Caco-2 (cell line): ENCODE measurements at regions of chr2 and their contacts with region 1.

Region 1: GRCh38 chr2:109545828-109546713 is 67.7 kb downstream of the SEPTIN10 start:
- DNase-seq: peak; percentile 60 to 81
- H3K4me3 ChIP-seq: no peak overlapping the region
- H3K4me3 Mint-ChIP-seq: no peak overlapping the region
- H3K27ac Mint-ChIP-seq: no peak overlapping the region
- H3K4me1 ChIP-seq: peaks cover 8% of the 10 kb centered on the region; the same call in 1 of the 2 replicates
- H3K4me1 Mint-ChIP-seq: peaks cover 4% of the 10 kb centered on the region
- H3K27me3 ChIP-seq: no peaks in the 10 kb centered on the region
- H3K27me3 Mint-ChIP-seq: no peaks in the 10 kb centered on the region
- CTCF ChIP-seq: peak; percentile 94 to 97

Region 2: GRCh38 chr2:109275120-109276012 is 270.7 kb before region 1 on chr2:
- CTCF ChIA-PET with region 1: no interaction called
- POLR2A ChIA-PET with region 1: no interaction called
- intact Hi-C with region 1: no loop called
- DNase-seq: no peak
- H3K4me3 ChIP-seq: no peak overlapping the region
- H3K4me3 Mint-ChIP-seq: no peak overlapping the region
- H3K27ac Mint-ChIP-seq: no peak overlapping the region
- H3K4me1 ChIP-seq: peaks cover 4% of the 10 kb centered on the region; the same call in 1 of the 2 replicates
- H3K4me1 Mint-ChIP-seq: no peaks in the 10 kb centered on the region
- H3K27me3 ChIP-seq: peaks cover 3% of the 10 kb centered on the region
- H3K27me3 Mint-ChIP-seq: no peaks in the 10 kb centered on the region
- CTCF ChIP-seq: no peak

Region 3: GRCh38 chr2:109516445-109517117 is 29.5 kb before region 1 on chr2:
- CTCF ChIA-PET with region 1: interaction called, 4 read pairs
- POLR2A ChIA-PET with region 1: no interaction called
- intact Hi-C with region 1: loop called (anchors 1 kb)
- DNase-seq: peak; percentile 75 to 82
- H3K4me3 ChIP-seq: no peak overlapping the region
- H3K4me3 Mint-ChIP-seq: no peak overlapping the region
- H3K27ac Mint-ChIP-seq: no peak overlapping the region
- H3K4me1 ChIP-seq: peaks cover 3% of the 10 kb centered on the region; the same call in 1 of the 2 replicates
- H3K4me1 Mint-ChIP-seq: no peaks in the 10 kb centered on the region
- H3K27me3 ChIP-seq: no peaks in the 10 kb centered on the region
- H3K27me3 Mint-ChIP-seq: no peaks in the 10 kb centered on the region
- CTCF ChIP-seq: peak; percentile 75 to 94

Region 4: GRCh38 chr2:109613922-109614714 is 68.0 kb after region 1 on chr2 and contains the starts of genes SEPTIN10 and SOWAHC:
- CTCF ChIA-PET with region 1: interaction called, 10 read pairs
- POLR2A ChIA-PET with region 1: interaction called, 4 read pairs
- intact Hi-C with region 1: loop called (anchors 1 kb)
- DNase-seq: peak; percentile 99 to 100
- H3K4me3 ChIP-seq: peak within 1 kb of the TSS; percentile 73
- H3K4me3 Mint-ChIP-seq: peak within 1 kb of the TSS; percentile 95
- H3K27ac Mint-ChIP-seq: peak within 1 kb of the TSS; percentile 95
- H3K4me1 ChIP-seq: peaks cover 32% of the 10 kb centered on the region
- H3K4me1 Mint-ChIP-seq: peaks cover 24% of the 10 kb centered on the region
- H3K27me3 ChIP-seq: no peaks in the 10 kb centered on the region
- H3K27me3 Mint-ChIP-seq: no peaks in the 10 kb centered on the region
- CTCF ChIP-seq: no peak
- total RNA-seq, gene SEPTIN10: 77.3 and 83.7 TPM in 2 replicates
- total RNA-seq, gene SOWAHC: 20.3 and 21.4 TPM in 2 replicates

Region 5: DNA sequence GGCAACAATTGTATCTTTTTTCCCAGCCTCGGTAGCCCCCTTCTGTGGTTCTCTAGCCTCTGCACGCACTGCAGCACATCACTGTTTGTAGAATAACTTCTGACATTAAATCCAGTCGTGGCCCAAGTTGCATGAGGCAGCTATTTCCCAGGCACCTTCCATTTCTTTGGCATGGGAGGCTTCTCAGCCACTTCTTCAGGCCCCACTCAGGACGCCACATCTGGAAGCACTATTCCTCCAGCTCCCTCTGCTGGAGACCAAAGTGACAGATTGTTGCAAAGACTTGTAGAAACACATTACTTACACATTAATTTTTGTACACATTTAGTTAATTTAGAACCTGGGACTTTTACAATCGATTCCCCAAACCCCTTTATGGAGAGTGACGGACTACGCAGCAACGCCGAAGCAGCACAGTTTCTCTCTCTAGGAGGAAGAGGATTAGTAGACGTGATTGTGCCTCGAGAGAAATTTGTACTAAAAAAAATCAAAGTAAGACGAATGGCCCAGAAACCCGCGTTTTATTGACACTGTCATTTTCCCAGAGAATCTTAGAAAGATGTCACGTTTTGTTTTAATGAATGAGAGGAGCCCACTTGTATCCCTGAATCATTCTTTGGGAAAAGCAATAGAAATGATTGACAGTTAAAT is 190.2 kb after region 1 on chr2:
- CTCF ChIA-PET with region 1: interaction called, 18 read pairs
- POLR2A ChIA-PET with region 1: no interaction called
- intact Hi-C with region 1: loop called (anchors 1 kb)
- DNase-seq: peak; percentile 72 to 79
- H3K4me3 ChIP-seq: no peak overlapping the region
- H3K4me3 Mint-ChIP-seq: no peak overlapping the region
- H3K27ac Mint-ChIP-seq: no peak overlapping the region
- H3K4me1 ChIP-seq: 0 out of 2 replicates have a peak, but pooled peaks cover 3% of the 10 kb centered on the region
- H3K4me1 Mint-ChIP-seq: peaks cover 6% of the 10 kb centered on the region
- H3K27me3 ChIP-seq: no peaks in the 10 kb centered on the region
- H3K27me3 Mint-ChIP-seq: no peaks in the 10 kb centered on the region
- CTCF ChIP-seq: peak; percentile 70 to 89